ENCODE measurements at regions of chr13 and their contacts with region 1.

Region 1: DNA sequence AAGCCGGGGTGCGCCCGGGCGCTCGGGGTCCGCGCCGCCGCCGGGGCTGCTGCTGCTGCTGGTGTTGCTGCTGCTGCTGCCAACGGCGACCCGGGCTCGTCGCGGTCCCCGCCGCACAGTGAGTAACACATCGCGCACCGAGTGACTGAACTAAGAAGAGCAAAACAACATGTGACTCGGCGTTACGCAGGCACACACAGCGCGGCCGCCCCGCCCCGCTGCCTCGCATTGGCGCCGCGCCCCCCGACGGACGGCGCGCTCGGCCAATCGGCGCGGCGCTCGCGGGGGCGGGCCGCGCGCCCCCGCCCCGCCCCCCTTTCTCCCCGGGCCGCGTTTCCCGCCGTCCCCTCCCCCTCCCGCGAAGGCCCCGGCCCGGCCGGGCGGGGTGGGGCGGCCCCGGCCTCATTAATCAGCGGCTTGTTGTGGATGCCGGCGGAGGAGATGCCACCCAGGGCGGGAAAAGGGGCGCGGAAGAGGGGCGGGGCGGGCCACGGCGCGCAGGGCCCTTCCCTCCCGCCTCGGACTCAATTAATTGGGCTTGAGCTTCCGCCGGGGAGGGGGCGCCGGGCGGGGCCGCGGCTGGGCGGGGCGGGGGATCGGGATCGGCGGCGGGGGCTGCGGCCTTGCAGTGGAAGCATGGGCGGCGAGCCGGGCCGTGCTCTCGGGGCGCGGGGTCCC is at the start of gene IRS2:
- DNase-seq: peak; percentile 84 to 95 (median 93)
- ATAC-seq: peak; percentile 84
- H3K4me3 ChIP-seq: peak within 1 kb of the TSS; percentile 45 to 76
- H3K4me3 Mint-ChIP-seq: peak within 1 kb of the TSS; percentile 87
- H3K27ac ChIP-seq: peak within 1 kb of the TSS in 1 of 2 experiments; percentile 63
- H3K27ac Mint-ChIP-seq: peak within 1 kb of the TSS; percentile 92
- H3K4me1 ChIP-seq: peaks cover 9% of the 10 kb centered on the region
- H3K4me1 Mint-ChIP-seq: peaks cover 24% of the 10 kb centered on the region
- H3K27me3 ChIP-seq: no peaks in the 10 kb centered on the region
- H3K27me3 Mint-ChIP-seq: no peaks in the 10 kb centered on the region
- CTCF ChIP-seq: no peak
- total RNA-seq, gene IRS2: 197 to 201 TPM

Region 2: DNA sequence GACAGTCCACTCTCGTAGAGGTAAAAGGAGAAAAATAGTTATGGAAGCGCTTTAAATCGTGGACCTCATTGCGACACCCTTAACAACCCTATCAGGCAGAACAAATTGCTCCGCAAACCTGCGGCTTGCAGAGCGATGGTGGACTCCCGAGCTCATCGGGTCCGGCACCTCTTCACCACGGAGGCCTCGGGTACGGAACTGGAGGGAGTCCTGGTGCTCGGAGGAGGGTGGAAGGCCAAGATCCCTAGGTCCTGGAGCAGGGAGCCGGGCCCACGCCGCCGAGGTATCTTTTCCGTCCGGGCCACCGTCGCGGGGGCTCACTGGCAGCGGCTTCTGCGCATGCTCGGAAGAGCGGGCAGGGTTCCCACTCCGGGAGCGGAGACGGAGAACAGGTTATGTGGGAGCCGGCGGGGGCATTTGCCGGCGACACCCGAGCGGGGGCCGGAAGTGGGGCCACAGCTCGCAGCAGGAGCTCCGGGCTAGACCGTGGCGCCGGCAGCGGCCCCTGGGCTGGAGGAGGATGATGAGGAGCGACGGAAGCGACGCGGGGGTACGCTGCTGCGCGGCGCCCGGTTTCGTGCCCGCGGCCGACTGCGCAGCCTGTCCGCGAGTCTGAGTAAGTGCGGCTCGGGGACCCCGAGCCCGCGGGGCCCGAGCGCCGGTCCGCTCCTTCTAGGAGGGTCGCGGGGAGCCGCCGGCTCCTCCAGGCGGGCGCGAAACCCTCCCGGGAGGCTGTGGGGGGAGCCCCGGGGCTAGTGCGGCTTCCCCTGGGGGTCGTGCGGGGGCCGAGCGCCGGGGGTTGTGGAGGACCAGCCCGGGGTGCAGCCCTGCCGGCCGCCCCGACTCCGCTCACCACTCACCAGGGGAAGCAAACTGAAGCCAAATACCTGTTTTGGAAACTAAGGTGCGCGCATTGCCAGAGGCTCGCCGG is 1568.3 kb before region 1 on chr13 and contains the start of gene ABHD13:
- CTCF ChIA-PET with region 1: no interaction called
- POLR2A ChIA-PET with region 1: interaction called, 5 read pairs
- intact Hi-C with region 1: loop called (anchors 2 to 5 kb)
- DNase-seq: peak; percentile 80 to 96 (median 89)
- ATAC-seq: peak; percentile 61
- H3K4me3 ChIP-seq: peak within 1 kb of the TSS; percentile 86 to 88
- H3K4me3 Mint-ChIP-seq: peak within 1 kb of the TSS; percentile 96
- H3K27ac ChIP-seq: peak within 1 kb of the TSS; percentile 61 to 81
- H3K27ac Mint-ChIP-seq: peak within 1 kb of the TSS; percentile 97
- H3K4me1 ChIP-seq: peaks cover 41% of the 10 kb centered on the region
- H3K4me1 Mint-ChIP-seq: peaks cover 57% of the 10 kb centered on the region
- H3K27me3 ChIP-seq: no peaks in the 10 kb centered on the region
- H3K27me3 Mint-ChIP-seq: no peaks in the 10 kb centered on the region
- CTCF ChIP-seq: no peak
- total RNA-seq, gene ABHD13: 15.6 to 15.7 TPM

Region 3: DNA sequence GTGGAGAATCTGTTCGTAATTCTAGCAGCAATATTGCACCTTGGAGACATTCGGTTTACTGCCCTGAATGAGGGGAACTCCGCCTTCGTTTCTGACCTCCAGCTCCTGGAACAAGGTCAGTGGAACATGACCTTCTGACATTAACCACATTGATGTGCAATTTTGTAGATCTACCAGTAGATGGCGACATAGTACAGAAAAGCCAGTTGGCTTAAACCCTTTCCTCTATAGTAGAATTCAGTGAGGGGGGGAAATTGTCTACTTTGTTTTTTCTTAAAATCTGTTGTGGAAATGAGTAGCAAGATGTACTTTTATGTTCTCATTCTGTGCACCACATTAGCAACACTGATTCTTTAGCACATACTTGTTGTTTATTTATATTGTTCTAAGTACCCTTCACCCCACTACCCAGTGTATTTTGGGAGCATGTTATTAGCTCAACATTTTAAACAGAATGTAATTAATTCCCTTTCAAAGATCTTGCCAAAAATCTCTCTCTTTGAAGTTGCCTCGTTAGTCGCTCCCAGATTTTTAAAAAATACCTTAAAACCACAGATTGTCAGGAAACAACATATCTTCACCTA is 825.0 kb before region 1 on chr13:
- CTCF ChIA-PET with region 1: interaction called, 3 read pairs
- POLR2A ChIA-PET with region 1: no interaction called
- intact Hi-C with region 1: loop called (anchors 1 kb)
- DNase-seq: peak in 5 of 9 experiments; percentile 5 to 57 (median 16)
- ATAC-seq: peak; percentile 52
- H3K4me3 ChIP-seq: no peak overlapping the region
- H3K4me3 Mint-ChIP-seq: no peak overlapping the region
- H3K27ac ChIP-seq: no peak overlapping the region
- H3K27ac Mint-ChIP-seq: no peak overlapping the region
- H3K4me1 ChIP-seq: no peaks in the 10 kb centered on the region
- H3K4me1 Mint-ChIP-seq: no peaks in the 10 kb centered on the region
- H3K27me3 ChIP-seq: no peaks in the 10 kb centered on the region
- H3K27me3 Mint-ChIP-seq: peaks cover 7% of the 10 kb centered on the region
- CTCF ChIP-seq: peak; percentile 97

Region 4: GRCh38 chr13:109427148-109427547 is 359.4 kb before region 1 on chr13:
- CTCF ChIA-PET with region 1: no interaction called
- POLR2A ChIA-PET with region 1: no interaction called
- intact Hi-C with region 1: loop called in 1 of 2 experiments (anchors 5 kb)
- DNase-seq: no peak
- ATAC-seq: no peak
- H3K4me3 ChIP-seq: no peak overlapping the region
- H3K4me3 Mint-ChIP-seq: no peak overlapping the region
- H3K27ac ChIP-seq: no peak overlapping the region
- H3K27ac Mint-ChIP-seq: no peak overlapping the region
- H3K4me1 ChIP-seq: no peaks in the 10 kb centered on the region
- H3K4me1 Mint-ChIP-seq: no peaks in the 10 kb centered on the region
- H3K27me3 ChIP-seq: no peaks in the 10 kb centered on the region
- H3K27me3 Mint-ChIP-seq: peaks cover 10% of the 10 kb centered on the region
- CTCF ChIP-seq: no peak

Region 5: GRCh38 chr13:109764470-109765291 is 21.9 kb before region 1 on chr13:
- CTCF ChIA-PET with region 1: interaction called, 4 read pairs
- POLR2A ChIA-PET with region 1: no interaction called
- intact Hi-C with region 1: loop called in 1 of 2 experiments (anchors 1 kb)
- DNase-seq: peak in 2 of 9 experiments; percentile 24 to 49
- ATAC-seq: peak; percentile 53
- H3K4me3 ChIP-seq: no peak overlapping the region
- H3K4me3 Mint-ChIP-seq: no peak overlapping the region
- H3K27ac ChIP-seq: no peak overlapping the region
- H3K27ac Mint-ChIP-seq: peak overlapping the region; percentile 32
- H3K4me1 ChIP-seq: peaks cover 10% of the 10 kb centered on the region
- H3K4me1 Mint-ChIP-seq: peaks cover 48% of the 10 kb centered on the region
- H3K27me3 ChIP-seq: no peaks in the 10 kb centered on the region
- H3K27me3 Mint-ChIP-seq: no peaks in the 10 kb centered on the region
- CTCF ChIP-seq: no peak